B cell (primary cell): ENCODE measurements at regions of chr2 and their contacts with region 1.

Region 1: GRCh38 chr2:74147727-74148456 is at the start of gene BOLA3:
- DNase-seq: peak; percentile 88
- ATAC-seq: peak; percentile 98
- H3K4me3 ChIP-seq: peak within 1 kb of the TSS; percentile 58 to 92 (median 67)
- H3K4me3 Mint-ChIP-seq: no peak within 1 kb of the TSS
- H3K27ac ChIP-seq: peak within 1 kb of the TSS; percentile 38 to 56
- H3K27ac Mint-ChIP-seq: no peak within 1 kb of the TSS
- H3K4me1 ChIP-seq: peaks cover 16 to 20% of the 10 kb centered on the region in 2 donors
- H3K4me1 Mint-ChIP-seq: peaks cover 9% of the 10 kb centered on the region
- H3K27me3 ChIP-seq: no peaks in the 10 kb centered on the region
- H3K27me3 Mint-ChIP-seq: no peaks in the 10 kb centered on the region
- CTCF ChIP-seq: peak; percentile 80
- total RNA-seq, gene BOLA3: 6.5 and 7.5 TPM in 2 replicates

Region 2: GRCh38 chr2:73907840-73908452 is 239.9 kb before region 1 on chr2:
- CTCF ChIA-PET with region 1: interaction called, 28 read pairs
- POLR2A ChIA-PET with region 1: interaction called, 5 read pairs
- intact Hi-C with region 1: loop called (anchors 1 kb)
- DNase-seq: peak; percentile 71
- ATAC-seq: peak; percentile 81
- H3K4me3 ChIP-seq: no peak overlapping the region
- H3K4me3 Mint-ChIP-seq: no peak overlapping the region
- H3K27ac ChIP-seq: no peak overlapping the region
- H3K27ac Mint-ChIP-seq: no peak overlapping the region
- H3K4me1 ChIP-seq: peaks cover 0 to 2% of the 10 kb centered on the region in 2 donors
- H3K4me1 Mint-ChIP-seq: peaks cover 2% of the 10 kb centered on the region
- H3K27me3 ChIP-seq: no peaks in the 10 kb centered on the region
- H3K27me3 Mint-ChIP-seq: no peaks in the 10 kb centered on the region
- CTCF ChIP-seq: peak; percentile 54

Region 3: DNA sequence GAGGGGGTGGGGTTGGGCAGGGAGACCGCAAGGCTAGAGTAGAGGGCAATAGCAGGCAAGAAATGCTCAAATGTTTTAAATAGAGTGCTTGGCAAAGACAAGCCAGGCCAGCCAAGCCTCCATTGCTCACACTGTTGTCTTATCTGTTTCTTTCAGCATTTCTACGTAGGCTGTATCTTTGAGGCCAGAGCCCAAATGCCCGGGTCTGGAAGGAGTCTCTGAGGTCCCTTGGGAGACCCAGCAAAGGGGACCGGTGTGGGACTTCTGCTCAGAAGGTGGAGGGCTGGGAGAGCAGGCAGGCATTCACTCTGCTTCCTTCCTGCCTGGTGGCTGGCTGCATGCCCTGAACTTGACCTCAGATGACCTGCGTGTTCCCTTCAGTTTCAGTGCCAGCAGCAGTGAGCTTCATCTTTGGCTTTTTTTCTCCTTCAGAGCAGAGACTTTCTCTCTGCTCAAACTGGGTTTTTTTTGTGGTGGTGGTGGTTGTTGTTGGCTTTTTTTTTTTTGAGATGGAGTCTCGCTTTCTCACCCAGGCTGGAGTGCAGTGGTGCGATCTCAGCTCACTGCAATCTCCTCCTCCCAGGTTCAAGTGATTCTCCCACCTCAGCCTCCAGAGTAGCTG is 176.9 kb before region 1 on chr2:
- CTCF ChIA-PET with region 1: no interaction called
- POLR2A ChIA-PET with region 1: no interaction called
- intact Hi-C with region 1: no loop called
- DNase-seq: peak; percentile 76
- ATAC-seq: peak; percentile 86
- H3K4me3 ChIP-seq: peak overlapping the region in 3 of 5 experiments; percentile 23 to 47 (median 31)
- H3K4me3 Mint-ChIP-seq: peak overlapping the region; percentile 73
- H3K27ac ChIP-seq: peak overlapping the region; percentile 5 to 53
- H3K27ac Mint-ChIP-seq: peak overlapping the region; percentile 65
- H3K4me1 ChIP-seq: peaks cover 35 to 38% of the 10 kb centered on the region in 2 donors
- H3K4me1 Mint-ChIP-seq: peaks cover 46% of the 10 kb centered on the region
- H3K27me3 ChIP-seq: no peaks in the 10 kb centered on the region
- H3K27me3 Mint-ChIP-seq: no peaks in the 10 kb centered on the region
- CTCF ChIP-seq: no peak

Region 4: GRCh38 chr2:73985308-73986084 is 162.4 kb before region 1 on chr2:
- CTCF ChIA-PET with region 1: no interaction called
- POLR2A ChIA-PET with region 1: no interaction called
- intact Hi-C with region 1: loop called (anchors 1 kb)
- DNase-seq: peak; percentile 92
- ATAC-seq: peak; percentile 72
- H3K4me3 ChIP-seq: peak overlapping the region; percentile 53 to 78 (median 66)
- H3K4me3 Mint-ChIP-seq: peak overlapping the region; percentile 82
- H3K27ac ChIP-seq: peak overlapping the region; percentile 71 to 72
- H3K27ac Mint-ChIP-seq: peak overlapping the region; percentile 89
- H3K4me1 ChIP-seq: peaks cover 55 to 66% of the 10 kb centered on the region in 2 donors
- H3K4me1 Mint-ChIP-seq: peaks cover 77% of the 10 kb centered on the region
- H3K27me3 ChIP-seq: peaks cover 0 to 3% (median under 1%) of the 10 kb centered on the region in 4 experiments
- H3K27me3 Mint-ChIP-seq: no peaks in the 10 kb centered on the region
- CTCF ChIP-seq: no peak

Region 5: DNA sequence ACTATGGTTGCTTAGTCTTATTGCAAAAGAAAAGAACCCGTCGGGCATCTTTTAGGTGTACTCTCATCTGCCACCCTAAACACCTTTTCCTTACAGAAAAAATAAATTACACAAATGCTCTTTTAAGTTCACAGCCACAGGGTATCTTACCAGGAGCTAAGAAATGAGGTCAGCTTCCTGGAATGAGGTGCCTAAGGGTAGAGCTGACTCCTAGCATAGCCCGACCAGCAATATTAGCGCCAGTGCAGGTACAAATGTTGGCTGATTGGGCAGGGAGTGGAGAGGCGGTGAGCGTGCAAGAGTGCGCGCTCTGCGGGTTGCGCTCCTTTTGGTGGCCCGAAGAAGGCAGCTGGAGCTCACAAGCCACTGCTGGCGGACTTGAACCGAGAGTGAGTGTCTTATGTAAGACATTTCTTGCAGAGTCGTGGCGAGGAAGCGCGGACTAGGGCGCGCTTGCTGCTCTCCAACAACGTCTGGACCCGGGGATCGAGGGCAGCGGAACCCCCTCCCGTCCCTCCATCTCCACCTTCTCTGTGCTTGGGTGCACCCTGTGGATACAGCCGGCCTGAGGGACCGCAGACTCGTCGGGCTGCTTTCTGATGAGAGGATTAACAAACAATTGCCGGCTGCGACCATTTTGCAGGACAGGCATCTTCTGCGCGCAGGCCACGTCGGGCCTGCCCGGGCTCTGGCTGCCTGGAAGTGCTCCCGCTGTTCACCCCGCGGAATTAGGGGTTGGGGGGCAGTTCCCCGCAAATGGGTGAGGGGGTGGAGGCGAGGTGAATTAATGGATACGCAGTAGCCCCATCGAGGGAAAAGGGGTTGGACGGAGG is 17.5 kb before region 1 on chr2:
- CTCF ChIA-PET with region 1: interaction called, 5 read pairs
- POLR2A ChIA-PET with region 1: interaction called, 10 read pairs
- intact Hi-C with region 1: no loop called
- DNase-seq: no peak
- ATAC-seq: no peak
- H3K4me3 ChIP-seq: no peak overlapping the region
- H3K4me3 Mint-ChIP-seq: no peak overlapping the region
- H3K27ac ChIP-seq: no peak overlapping the region
- H3K27ac Mint-ChIP-seq: no peak overlapping the region
- H3K4me1 ChIP-seq: no peaks in the 10 kb centered on the region
- H3K4me1 Mint-ChIP-seq: no peaks in the 10 kb centered on the region
- H3K27me3 ChIP-seq: peaks cover 0 to 12% (median 0%) of the 10 kb centered on the region in 4 experiments
- H3K27me3 Mint-ChIP-seq: no peaks in the 10 kb centered on the region
- CTCF ChIP-seq: no peak

Region 6: GRCh38 chr2:74334931-74335333 is 187.0 kb after region 1 on chr2:
- CTCF ChIA-PET with region 1: interaction called, 12 read pairs
- POLR2A ChIA-PET with region 1: no interaction called
- intact Hi-C with region 1: no loop called
- DNase-seq: peak; percentile 76
- ATAC-seq: peak; percentile 74
- H3K4me3 ChIP-seq: no peak overlapping the region
- H3K4me3 Mint-ChIP-seq: no peak overlapping the region
- H3K27ac ChIP-seq: no peak overlapping the region
- H3K27ac Mint-ChIP-seq: no peak overlapping the region
- H3K4me1 ChIP-seq: no peaks in the 10 kb centered on the region
- H3K4me1 Mint-ChIP-seq: no peaks in the 10 kb centered on the region
- H3K27me3 ChIP-seq: no peaks in the 10 kb centered on the region
- H3K27me3 Mint-ChIP-seq: no peaks in the 10 kb centered on the region
- CTCF ChIP-seq: peak; percentile 100

Region 7: DNA sequence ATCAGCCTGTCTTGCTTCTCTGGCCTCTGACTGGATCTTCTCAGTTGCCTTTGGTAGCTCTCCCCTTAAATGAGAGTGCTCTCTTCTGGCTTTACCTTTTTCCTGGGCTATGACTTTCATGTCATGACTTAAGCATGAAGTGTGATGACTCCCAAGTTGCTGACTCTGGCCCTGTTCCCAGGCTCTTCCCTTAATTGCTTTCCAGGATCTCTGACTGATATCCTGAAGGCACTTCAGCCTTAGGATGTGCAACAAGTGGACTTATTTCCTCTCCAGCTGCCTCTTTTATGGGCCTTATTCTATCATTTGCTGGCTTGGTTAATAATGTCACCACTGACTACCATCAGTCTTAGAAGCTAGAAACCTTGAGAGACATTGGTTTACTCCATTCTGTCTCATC is 523.6 kb after region 1 on chr2:
- CTCF ChIA-PET with region 1: no interaction called
- POLR2A ChIA-PET with region 1: no interaction called
- intact Hi-C with region 1: no loop called
- DNase-seq: no peak
- ATAC-seq: no peak
- H3K4me3 ChIP-seq: no peak overlapping the region
- H3K4me3 Mint-ChIP-seq: no peak overlapping the region
- H3K27ac ChIP-seq: no peak overlapping the region
- H3K27ac Mint-ChIP-seq: no peak overlapping the region
- H3K4me1 ChIP-seq: no peaks in the 10 kb centered on the region
- H3K4me1 Mint-ChIP-seq: no peaks in the 10 kb centered on the region
- H3K27me3 ChIP-seq: no peaks in the 10 kb centered on the region
- H3K27me3 Mint-ChIP-seq: no peaks in the 10 kb centered on the region
- CTCF ChIP-seq: no peak